Activated CD8-positive, alpha-beta T cell treated with anti-CD3 and anti-CD28 coated beads for 36 hours (primary cell): ENCODE measurements at regions of chr15 and their contacts with region 1.

Region 1: GRCh38 chr15:86611417-86612040 is 531.9 kb downstream of the AGBL1 start:
- DNase-seq: peak; percentile 33
- ATAC-seq: peak; percentile 80
- H3K4me3 Mint-ChIP-seq: no peak overlapping the region
- H3K27ac Mint-ChIP-seq: no peak overlapping the region
- H3K4me1 Mint-ChIP-seq: peaks cover 40% of the 10 kb centered on the region
- H3K27me3 Mint-ChIP-seq: no peaks in the 10 kb centered on the region
- CTCF ChIP-seq: no peak

Region 2: GRCh38 chr15:86336051-86336788 is 275.3 kb before region 1 on chr15:
- CTCF ChIA-PET with region 1: no interaction called
- POLR2A ChIA-PET with region 1: no interaction called
- intact Hi-C with region 1: loop called (anchors 5 kb)
- DNase-seq: no peak
- ATAC-seq: no peak
- H3K4me3 Mint-ChIP-seq: no peak overlapping the region
- H3K27ac Mint-ChIP-seq: no peak overlapping the region
- H3K4me1 Mint-ChIP-seq: no peaks in the 10 kb centered on the region
- H3K27me3 Mint-ChIP-seq: no peaks in the 10 kb centered on the region
- CTCF ChIP-seq: no peak

Region 3: DNA sequence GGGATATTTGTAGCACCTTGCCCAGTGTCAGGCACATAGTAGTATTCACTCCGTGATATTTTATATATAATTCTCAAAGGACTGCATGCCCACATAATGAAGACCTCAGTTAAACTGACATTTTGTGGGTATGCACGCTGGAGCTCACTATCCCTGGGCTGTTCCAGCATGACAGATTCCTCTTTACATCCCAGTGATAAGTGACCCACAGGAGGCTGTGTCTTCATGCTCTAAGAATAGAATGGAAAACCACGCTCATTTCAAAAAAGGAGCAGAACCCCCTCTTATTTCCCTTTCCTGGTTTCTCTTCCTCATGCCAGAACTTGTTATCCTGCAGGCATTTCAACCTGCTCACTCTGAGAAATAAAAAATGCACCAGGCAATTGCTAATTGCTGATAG is 185.6 kb after region 1 on chr15:
- CTCF ChIA-PET with region 1: no interaction called
- POLR2A ChIA-PET with region 1: no interaction called
- intact Hi-C with region 1: no loop called
- DNase-seq: no peak
- ATAC-seq: no peak
- H3K4me3 Mint-ChIP-seq: no peak overlapping the region
- H3K27ac Mint-ChIP-seq: no peak overlapping the region
- H3K4me1 Mint-ChIP-seq: no peaks in the 10 kb centered on the region
- H3K27me3 Mint-ChIP-seq: peaks cover 2% of the 10 kb centered on the region
- CTCF ChIP-seq: no peak